ENCODE measurements at regions of chr3 and their contacts with region 1.

Region 1: GRCh38 chr3:69306239-69307185 is 79.4 kb downstream of the FRMD4B start:
- DNase-seq: peak; percentile 80
- H3K4me3 Mint-ChIP-seq: no peak overlapping the region
- H3K27ac Mint-ChIP-seq: no peak overlapping the region
- H3K4me1 Mint-ChIP-seq: peaks cover 22% of the 10 kb centered on the region
- H3K27me3 Mint-ChIP-seq: peaks cover 4% of the 10 kb centered on the region

Region 2: DNA sequence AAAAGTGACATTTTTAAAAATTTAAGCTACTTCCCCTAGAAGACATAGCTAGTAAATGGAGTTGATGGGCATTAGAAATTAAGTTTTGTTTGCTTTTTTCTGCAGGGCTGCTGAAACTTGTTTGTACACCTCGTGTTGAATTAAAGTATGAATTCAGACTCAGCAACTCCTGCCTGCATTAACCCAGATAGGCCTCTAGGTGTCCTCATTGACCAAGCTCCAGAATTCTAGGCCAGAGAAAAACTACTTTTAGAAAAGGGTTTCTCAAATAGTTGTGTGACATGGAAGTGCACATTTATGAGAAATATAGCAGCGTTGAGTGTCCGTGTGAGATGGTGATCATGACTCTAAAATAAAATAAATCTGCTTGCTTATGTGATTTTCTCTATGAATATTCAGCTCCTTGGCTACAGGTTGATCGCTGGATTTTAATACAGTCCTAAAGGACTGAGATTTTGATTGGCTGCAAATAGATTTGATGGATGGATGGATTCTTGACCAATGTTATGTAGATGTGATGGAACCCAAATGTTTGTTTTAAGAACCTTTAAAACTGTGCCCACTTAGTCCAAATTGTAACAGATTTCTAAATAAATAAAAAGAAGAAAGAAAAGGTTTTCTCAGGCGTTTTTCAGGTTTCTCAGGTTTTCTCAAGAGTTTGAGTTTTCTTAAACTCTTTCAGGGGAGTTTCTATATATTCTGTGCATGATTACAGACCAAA is 144.8 kb before region 1 on chr3:
- CTCF ChIA-PET with region 1: interaction called, 271 read pairs
- POLR2A ChIA-PET with region 1: interaction called, 15 read pairs
- DNase-seq: peak; percentile 42
- H3K4me3 Mint-ChIP-seq: no peak overlapping the region
- H3K27ac Mint-ChIP-seq: no peak overlapping the region
- H3K4me1 Mint-ChIP-seq: peaks cover 15% of the 10 kb centered on the region
- H3K27me3 Mint-ChIP-seq: peaks cover 7% of the 10 kb centered on the region

Region 3: DNA sequence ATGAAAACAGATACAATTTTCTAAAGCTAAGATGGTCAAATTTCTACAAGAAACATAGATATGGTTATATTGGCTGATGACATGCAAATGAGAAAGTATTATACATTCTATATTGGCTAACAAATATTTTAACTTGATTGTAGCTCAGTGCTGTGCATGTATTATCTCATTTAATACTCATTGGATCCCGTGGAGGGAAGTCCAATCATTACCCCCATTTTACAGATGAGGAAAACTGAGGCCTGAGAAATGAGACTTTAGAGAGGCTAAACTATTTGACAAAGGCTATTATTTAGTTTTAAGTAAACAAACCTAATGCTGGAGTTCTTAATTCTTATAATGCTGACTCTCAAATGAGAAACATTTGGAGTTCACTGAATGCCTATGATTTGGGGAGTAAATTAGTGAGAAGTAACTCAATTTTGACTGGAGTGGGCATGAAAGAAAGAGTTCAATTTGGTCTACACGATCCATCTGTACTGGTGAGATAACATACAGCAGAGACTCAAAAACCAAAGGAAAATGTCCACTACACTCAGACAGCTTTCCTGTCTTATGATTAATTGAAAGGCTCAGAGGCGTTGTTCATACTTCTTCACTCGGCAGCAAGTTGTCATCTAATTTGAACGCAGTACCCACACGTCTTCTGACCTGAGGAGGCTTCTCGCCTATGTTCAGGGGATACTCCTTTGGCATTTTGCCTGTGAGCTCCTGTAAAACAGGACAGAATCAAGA is 111.9 kb before region 1 on chr3:
- CTCF ChIA-PET with region 1: interaction called, 30 read pairs
- POLR2A ChIA-PET with region 1: interaction called, 11 read pairs
- DNase-seq: no peak
- H3K4me3 Mint-ChIP-seq: no peak overlapping the region
- H3K27ac Mint-ChIP-seq: no peak overlapping the region
- H3K4me1 Mint-ChIP-seq: peaks cover 67% of the 10 kb centered on the region
- H3K27me3 Mint-ChIP-seq: no peaks in the 10 kb centered on the region

Region 4: DNA sequence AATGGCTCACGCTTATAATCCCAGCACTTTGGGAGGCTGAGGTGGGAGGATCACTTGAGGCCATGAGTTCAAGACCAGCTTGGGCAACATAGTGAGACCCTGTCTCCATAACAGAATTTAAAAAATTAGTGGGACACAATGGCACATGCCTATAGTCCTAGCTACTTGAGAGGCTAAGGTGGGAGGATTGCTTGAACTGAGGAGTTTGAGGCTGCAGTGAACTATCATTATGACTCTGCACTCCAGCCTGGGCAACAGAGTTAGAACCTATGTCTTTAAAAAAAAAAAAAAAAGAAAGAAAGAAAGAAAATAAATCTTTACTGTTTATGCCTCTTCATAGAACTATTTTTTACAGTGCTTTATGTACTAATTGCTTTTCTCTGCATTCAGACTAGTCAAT is 99.5 kb before region 1 on chr3:
- CTCF ChIA-PET with region 1: interaction called, 10 read pairs
- POLR2A ChIA-PET with region 1: no interaction called
- DNase-seq: no peak
- H3K4me3 Mint-ChIP-seq: no peak overlapping the region
- H3K27ac Mint-ChIP-seq: peak overlapping the region; percentile 97
- H3K4me1 Mint-ChIP-seq: peaks cover 81% of the 10 kb centered on the region
- H3K27me3 Mint-ChIP-seq: no peaks in the 10 kb centered on the region

Region 5: GRCh38 chr3:69288161-69288895 is 18.2 kb before region 1 on chr3:
- CTCF ChIA-PET with region 1: interaction called, 18 read pairs
- POLR2A ChIA-PET with region 1: interaction called, 3 read pairs
- DNase-seq: peak; percentile 46
- H3K4me3 Mint-ChIP-seq: peak overlapping the region; percentile 28
- H3K27ac Mint-ChIP-seq: peak overlapping the region; percentile 46
- H3K4me1 Mint-ChIP-seq: peaks cover 24% of the 10 kb centered on the region
- H3K27me3 Mint-ChIP-seq: peaks cover 3% of the 10 kb centered on the region

Region 6: GRCh38 chr3:69474186-69474585 is 167.7 kb after region 1 on chr3:
- CTCF ChIA-PET with region 1: no interaction called
- POLR2A ChIA-PET with region 1: no interaction called
- DNase-seq: no peak
- H3K4me3 Mint-ChIP-seq: no peak overlapping the region
- H3K27ac Mint-ChIP-seq: no peak overlapping the region
- H3K4me1 Mint-ChIP-seq: no peaks in the 10 kb centered on the region
- H3K27me3 Mint-ChIP-seq: peaks cover 5% of the 10 kb centered on the region

Measured in activated CD4-positive, alpha-beta memory T cell treated with anti-CD3 and anti-CD28 coated beads, Interleukin-2, amount 10 ng/mL, durations not matched to agents 7 days and 5 days (primary cell).